ENCODE measurements at regions of chr6 and their contacts with region 1.

Region 1: DNA sequence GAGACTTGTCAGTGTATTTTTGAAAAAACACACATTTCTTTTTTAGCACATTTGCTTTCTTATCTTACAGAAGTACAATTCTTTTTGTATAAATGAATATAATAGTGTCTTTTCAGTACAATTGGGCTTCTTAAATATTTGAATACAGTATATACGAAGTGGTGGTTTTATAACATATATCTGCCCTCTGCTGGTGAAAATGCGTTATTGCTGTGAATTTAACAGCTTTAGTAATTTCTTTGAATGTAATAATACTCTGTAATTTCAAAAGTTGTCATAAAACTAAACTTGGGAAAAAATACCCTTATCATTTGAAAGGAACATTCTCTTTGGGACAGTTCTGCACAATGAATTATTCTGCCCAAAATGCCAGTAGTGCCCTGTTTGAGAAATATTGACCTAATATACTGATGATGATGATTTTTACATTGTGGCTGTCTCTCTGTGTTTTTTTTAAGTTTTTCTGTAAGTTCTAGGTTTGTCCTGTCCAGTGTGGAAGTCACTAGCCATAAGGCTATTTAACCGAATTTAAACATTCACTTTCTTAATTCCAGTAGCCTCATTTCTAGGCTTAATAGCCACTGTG is 19.0 kb downstream of the SMAP1 start:
- DNase-seq: no peak
- ATAC-seq: peak; percentile 74
- H3K4me3 ChIP-seq: no peak overlapping the region
- H3K27ac ChIP-seq: no peak overlapping the region
- H3K4me1 ChIP-seq: peaks cover 0 to 2% of the 10 kb centered on the region in 2 donors
- H3K27me3 ChIP-seq: no peaks in the 10 kb centered on the region

Region 2: DNA sequence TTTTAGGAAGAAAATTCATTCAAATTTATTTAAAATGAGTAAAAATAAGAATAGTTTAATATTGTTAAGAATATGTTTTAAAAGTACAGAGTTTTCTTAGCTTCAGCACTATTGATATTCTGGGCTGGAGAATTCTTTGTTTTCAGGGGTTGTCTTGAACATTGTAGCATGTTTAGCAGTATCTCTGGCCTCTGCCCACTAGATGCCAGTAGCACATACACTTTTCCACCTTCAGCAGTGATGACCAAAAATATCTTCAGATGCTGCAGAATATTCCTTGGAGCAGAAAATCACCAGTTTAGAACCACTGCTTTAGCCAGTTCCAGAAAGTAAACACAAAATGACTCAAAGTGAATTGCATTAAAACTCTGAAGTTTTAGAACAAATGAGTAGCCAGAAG is 139.3 kb before region 1 on chr6:
- intact Hi-C with region 1: loop called (anchors 5 kb)
- DNase-seq: no peak
- ATAC-seq: no peak
- H3K4me3 ChIP-seq: no peak overlapping the region
- H3K27ac ChIP-seq: no peak overlapping the region
- H3K4me1 ChIP-seq: no peaks in the 10 kb centered on the region
- H3K27me3 ChIP-seq: no peaks in the 10 kb centered on the region

Region 3: DNA sequence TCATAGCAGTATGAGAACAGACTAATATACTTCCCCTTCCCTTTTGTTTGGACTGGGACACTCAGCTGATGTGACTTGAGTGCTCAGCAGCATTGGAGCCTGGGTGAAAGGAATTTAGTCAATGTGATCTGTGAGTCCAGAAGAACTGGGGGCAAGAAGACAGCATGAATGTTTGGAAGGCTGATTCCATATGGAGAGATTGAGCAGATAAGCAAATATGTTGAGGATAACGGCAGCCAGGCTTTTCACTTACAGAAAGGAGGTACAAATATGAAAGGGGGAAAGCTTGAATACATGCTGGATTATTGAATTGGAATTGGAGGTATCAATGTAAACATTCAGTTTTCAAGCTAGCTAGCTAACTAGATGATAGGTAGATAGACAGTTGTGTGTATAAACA is 56.7 kb before region 1 on chr6:
- intact Hi-C with region 1: no loop called
- DNase-seq: no peak
- ATAC-seq: no peak
- H3K4me3 ChIP-seq: no peak overlapping the region
- H3K27ac ChIP-seq: no peak overlapping the region
- H3K4me1 ChIP-seq: no peaks in the 10 kb centered on the region
- H3K27me3 ChIP-seq: no peaks in the 10 kb centered on the region